ENCODE measurements at regions of chr20 and their contacts with region 1.

Region 1: DNA sequence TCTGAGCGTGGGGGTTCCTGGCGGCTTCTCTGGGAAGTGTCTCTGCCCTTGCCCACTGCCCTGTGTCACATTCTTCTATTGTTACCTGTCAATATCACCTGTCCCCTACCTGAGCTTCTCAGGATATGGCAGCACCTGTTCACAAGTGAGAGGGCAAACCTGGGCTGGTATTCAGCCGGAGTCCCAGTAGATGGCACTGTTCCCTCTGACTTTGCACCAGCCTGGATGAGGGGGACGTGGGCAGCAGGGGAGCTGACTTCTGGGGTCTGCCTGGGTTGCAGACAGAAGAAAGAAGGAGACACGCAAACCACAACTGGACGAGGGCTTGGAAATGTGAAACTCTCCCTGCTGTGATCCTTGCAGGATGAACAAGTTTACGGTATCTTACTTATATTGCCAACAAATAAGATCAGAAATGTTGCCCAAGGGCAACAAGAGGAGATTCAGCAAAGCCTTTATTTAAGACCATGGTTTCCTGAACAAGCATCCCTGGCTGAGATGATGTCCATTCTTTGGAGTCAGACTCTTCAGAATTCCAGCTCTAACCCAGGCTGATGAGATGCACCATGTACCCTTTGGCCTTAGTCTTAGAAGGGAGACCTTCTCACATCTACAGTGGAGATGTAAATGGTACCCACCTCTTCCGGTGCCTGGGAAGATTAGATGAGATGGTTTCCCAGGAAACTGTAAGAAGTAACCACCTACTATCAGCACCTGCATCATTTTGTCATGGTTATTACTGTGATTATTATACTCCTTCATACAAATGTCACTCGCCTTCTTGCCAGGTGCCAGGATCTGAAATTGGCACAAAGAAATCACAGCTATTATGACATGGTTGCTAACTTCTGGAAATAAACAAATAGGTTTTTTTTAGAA is 400.0 kb upstream of the CDH4 start:
- DNase-seq: no peak
- H3K4me3 ChIP-seq: no peak overlapping the region
- H3K27ac ChIP-seq: no peak overlapping the region
- H3K4me1 ChIP-seq: no peaks in the 10 kb centered on the region
- H3K27me3 ChIP-seq: no peaks in the 10 kb centered on the region
- CTCF ChIP-seq: no peak

Region 2: DNA sequence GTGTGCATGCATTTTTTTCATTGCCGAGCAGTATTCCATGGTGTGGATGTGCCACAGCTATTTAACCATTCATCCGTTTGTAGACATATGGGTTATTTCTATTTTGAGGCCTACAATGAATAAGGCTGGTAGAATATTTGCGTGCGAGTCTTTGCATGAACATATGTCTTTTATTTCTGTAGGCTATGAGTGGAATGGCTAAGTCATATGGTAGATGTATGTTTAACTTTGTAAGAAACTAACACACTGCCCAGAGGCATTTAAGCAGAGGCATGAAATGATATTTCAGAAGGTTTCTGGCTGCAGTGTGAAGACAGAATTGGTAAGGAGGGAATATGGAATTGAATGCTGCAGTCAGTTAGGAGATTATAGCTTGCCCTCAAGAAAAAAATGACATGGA is 57.4 kb before region 1 on chr20:
- intact Hi-C with region 1: no loop called
- DNase-seq: no peak
- H3K4me3 ChIP-seq: no peak overlapping the region
- H3K27ac ChIP-seq: no peak overlapping the region
- H3K4me1 ChIP-seq: no peaks in the 10 kb centered on the region
- H3K27me3 ChIP-seq: peaks cover 0 to 4% of the 10 kb centered on the region in 2 donors
- CTCF ChIP-seq: no peak

Region 3: GRCh38 chr20:60900618-60901017 is 48.6 kb after region 1 on chr20:
- intact Hi-C with region 1: no loop called
- DNase-seq: no peak
- H3K4me3 ChIP-seq: no peak overlapping the region
- H3K27ac ChIP-seq: no peak overlapping the region
- H3K4me1 ChIP-seq: no peaks in the 10 kb centered on the region
- H3K27me3 ChIP-seq: no peaks in the 10 kb centered on the region
- CTCF ChIP-seq: no peak

Region 4: GRCh38 chr20:61422653-61423443 is 570.8 kb after region 1 on chr20:
- intact Hi-C with region 1: loop called (anchors 5 kb)
- DNase-seq: no peak
- H3K4me3 ChIP-seq: no peak overlapping the region
- H3K27ac ChIP-seq: no peak overlapping the region
- H3K4me1 ChIP-seq: no peaks in the 10 kb centered on the region
- H3K27me3 ChIP-seq: no peaks in the 10 kb centered on the region
- CTCF ChIP-seq: no peak

Measured in tibial artery (tissue), 4 donors.